Panc1 (cell line): ENCODE measurements at regions of chr1 and their contacts with region 1.

Region 1: DNA sequence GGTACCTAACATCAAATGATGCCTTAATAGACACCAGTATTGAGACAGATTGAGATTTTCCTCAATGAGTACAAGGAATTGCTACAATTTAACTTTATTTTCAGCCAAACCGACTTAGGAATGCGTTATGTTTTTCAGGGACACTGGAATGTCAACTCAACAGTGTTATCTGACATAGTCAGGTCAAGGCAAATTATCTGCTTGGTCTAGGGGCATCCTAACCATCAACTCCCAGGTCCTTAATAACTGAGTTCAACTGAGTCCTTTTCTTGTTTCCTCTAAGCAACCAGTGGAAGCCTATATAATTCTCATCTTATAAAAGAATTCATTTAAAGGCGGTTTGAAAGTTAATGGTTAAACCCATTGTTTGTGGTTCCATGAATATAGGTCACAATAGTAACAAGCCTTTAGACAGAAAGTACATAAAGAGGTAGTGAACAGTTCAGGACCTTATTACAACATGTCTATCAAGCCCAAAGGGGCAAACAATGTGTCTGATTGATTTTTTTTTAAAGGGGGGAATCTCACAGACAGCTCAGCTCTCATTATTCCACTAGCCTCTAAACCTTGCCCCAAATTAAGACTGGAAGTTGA is 32.3 kb upstream of the NR5A2 start:
- DNase-seq: no peak
- ATAC-seq: no peak
- H3K4me3 ChIP-seq: no peak overlapping the region
- H3K27ac ChIP-seq: no peak overlapping the region
- H3K4me1 ChIP-seq: no peaks in the 10 kb centered on the region
- H3K27me3 ChIP-seq: no peaks in the 10 kb centered on the region
- CTCF ChIP-seq: no peak

Region 2: DNA sequence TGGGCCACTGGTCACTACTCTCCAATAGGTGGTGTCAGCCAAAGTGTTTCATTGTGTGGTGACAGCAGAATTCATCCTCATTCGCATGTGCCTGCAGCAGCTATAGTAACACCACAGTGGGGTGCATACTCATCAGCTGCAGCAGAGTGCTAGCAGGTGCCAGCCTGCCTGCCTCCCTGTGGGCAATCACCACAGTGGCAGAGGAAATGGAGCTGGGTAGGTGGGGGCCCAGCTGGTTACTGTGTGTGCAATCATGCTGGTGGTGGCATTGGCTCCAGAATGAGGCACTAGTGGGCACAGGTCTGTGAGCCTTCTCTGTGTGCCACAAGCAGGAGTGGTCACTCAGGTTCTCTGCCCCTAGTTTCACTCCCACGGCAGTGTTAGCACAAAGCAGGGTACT is 777.1 kb before region 1 on chr1:
- CTCF ChIA-PET with region 1: no interaction called
- POLR2A ChIA-PET with region 1: interaction called, 12 read pairs
- in situ Hi-C with region 1: no loop called
- intact Hi-C with region 1: no loop called
- DNase-seq: no peak
- ATAC-seq: no peak
- H3K4me3 ChIP-seq: no peak overlapping the region
- H3K27ac ChIP-seq: no peak overlapping the region
- H3K4me1 ChIP-seq: no peaks in the 10 kb centered on the region
- H3K27me3 ChIP-seq: no peaks in the 10 kb centered on the region
- CTCF ChIP-seq: no peak

Region 3: DNA sequence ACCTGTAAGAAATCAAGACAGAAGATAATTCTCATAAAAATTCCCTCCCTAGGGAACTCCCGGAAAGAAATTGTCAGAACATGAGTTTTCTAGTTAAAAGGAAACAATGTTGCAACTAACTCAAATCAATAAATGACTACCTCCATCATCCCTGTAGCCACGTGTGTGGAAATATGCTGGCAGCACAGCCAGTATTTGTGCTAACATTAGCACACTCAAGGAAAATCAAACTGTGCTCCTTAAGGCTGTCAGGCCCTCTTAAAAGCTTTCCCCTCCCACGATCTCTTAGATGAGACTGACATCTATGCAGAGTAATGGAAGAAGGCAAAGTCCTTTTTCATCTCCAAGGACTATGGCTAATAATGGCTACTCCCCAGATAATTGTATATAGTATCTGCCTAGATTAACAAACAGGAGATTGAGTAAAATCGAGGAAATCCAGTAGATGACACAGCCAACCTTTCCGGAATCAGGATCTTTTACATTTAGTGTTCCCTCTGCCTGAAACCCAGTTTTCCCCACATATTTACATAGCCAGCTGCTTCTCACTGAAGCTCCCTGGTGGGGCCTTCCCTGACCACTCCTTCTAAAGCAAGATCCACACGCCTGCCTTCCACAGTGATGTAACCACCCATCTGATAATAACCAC is 18.6 kb before region 1 on chr1:
- CTCF ChIA-PET with region 1: no interaction called
- POLR2A ChIA-PET with region 1: no interaction called
- in situ Hi-C with region 1: no loop called
- intact Hi-C with region 1: no loop called
- DNase-seq: no peak
- ATAC-seq: no peak
- H3K4me3 ChIP-seq: no peak overlapping the region
- H3K27ac ChIP-seq: no peak overlapping the region
- H3K4me1 ChIP-seq: no peaks in the 10 kb centered on the region
- H3K27me3 ChIP-seq: no peaks in the 10 kb centered on the region
- CTCF ChIP-seq: no peak